ENCODE measurements at regions of chr11 and their contacts with region 1.

Region 1: DNA sequence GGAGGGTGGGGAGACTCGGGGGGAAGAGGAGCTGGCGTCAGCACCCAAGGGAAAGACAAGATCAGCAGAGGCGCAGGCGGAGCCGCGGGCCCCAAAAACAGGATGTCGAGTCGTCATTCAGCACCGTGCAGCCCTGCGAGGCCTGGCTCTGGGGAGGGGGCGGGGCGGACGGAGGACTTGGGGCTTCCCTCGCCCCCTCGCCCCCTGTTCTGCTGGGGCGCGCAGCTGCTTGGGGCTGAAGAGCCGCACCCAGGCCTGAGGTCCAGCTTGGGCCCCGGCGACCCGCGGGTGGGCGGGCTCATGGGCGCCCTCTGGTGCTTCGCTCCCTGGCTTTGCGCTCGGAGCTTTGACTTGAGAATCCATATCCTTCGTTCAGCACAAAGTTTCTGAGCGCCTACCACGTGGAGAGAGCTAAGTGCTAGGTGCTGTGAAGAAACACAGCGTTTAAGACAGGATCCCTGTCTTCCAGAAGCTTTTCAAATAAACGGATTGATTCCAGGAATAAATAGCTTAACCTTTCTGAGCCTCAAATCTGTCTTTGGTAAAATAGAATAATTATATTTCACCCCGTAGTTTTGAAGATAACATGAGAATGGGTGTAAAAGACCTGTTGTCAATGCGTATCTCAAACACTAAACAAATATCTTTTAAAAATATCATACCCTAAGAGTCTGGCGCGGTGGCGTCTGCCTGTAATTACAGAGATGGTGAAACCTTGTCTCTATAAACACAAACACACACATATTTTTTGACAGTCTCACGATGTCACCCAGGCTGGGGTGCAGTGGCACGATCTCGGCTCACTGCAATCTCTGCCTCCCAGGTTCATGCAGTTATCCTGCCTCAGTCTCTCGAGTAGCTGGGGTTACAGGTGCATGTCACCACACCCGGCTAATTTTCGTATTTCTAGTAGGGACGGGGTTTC is 929 bp upstream of the RHOG start:
- DNase-seq: peak; percentile 89 to 97 (median 94)
- ATAC-seq: peak; percentile 74 to 82
- H3K4me3 Mint-ChIP-seq: peak overlapping the region; percentile 84 to 96 (median 88)
- H3K27ac Mint-ChIP-seq: peak overlapping the region; percentile 90 to 100 (median 98)
- H3K4me1 Mint-ChIP-seq: peaks cover 28 to 51% (median 41%) of the 10 kb centered on the region in 4 donors
- H3K27me3 Mint-ChIP-seq: no peaks in the 10 kb centered on the region

Region 2: DNA sequence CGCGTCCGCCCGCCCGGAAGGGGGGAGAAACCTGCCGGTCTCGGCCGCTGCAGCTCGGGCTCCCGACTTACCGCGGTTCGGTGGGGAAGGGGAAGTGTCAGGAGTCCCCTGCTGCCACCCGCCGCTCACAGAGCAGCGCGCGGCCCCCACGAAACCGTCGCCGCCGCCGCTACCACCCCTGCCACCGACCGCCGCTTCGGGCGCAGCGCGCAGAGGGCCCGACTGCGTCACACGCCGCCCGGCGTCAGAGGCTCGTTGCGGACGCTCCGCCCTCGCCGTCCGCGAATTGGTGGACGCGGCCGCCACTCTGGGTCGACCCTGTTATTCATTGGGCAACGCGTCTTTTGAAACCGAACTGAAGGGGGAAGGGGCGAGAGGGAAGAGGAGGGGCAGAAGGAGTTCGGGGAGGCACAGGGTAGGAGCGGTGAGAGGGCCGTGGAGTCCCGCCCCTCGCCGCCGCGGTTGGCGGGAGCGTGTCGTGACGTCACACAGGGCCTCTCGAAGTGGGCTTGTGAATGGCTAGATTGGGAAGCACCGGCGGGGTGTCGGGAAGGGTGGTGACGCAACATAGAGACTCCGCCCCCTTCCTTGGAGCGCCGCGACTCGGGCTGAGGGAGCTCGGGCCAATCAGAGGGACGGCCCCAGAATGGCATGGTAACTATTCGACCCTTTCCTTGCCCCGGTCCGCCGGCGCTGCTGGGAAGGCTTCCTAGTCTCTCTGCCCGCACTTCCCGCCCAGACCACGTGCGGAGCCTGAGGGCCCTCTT is 44.2 kb before region 1 on chr11 and contains the start of gene NUP98:
- POLR2A ChIA-PET with region 1: interaction called, 27 read pairs
- DNase-seq: peak; percentile 97 to 100 (median 100)
- ATAC-seq: peak; percentile 93
- H3K4me3 Mint-ChIP-seq: peak within 1 kb of the TSS; percentile 86 to 97 (median 96)
- H3K27ac Mint-ChIP-seq: peak within 1 kb of the TSS; percentile 97 to 100 (median 99)
- H3K4me1 Mint-ChIP-seq: peaks cover 17 to 60% (median 52%) of the 10 kb centered on the region in 4 donors
- H3K27me3 Mint-ChIP-seq: peaks cover 0 to 2% (median 0%) of the 10 kb centered on the region in 5 donors
- polyA plus RNA-seq, gene NUP98: 31.8 to 50.9 (median 44.9) TPM

Region 3: GRCh38 chr11:3824714-3825472 is 16.8 kb before region 1 on chr11:
- POLR2A ChIA-PET with region 1: interaction called, 81 read pairs
- DNase-seq: peak; percentile 58 to 91 (median 78)
- ATAC-seq: peak; percentile 94 to 97
- H3K4me3 Mint-ChIP-seq: peak overlapping the region in 2 of 10 donors; percentile 20 to 68
- H3K27ac Mint-ChIP-seq: peak overlapping the region; percentile 79 to 96 (median 91)
- H3K4me1 Mint-ChIP-seq: peaks cover 20 to 51% (median 40%) of the 10 kb centered on the region in 4 donors
- H3K27me3 Mint-ChIP-seq: no peaks in the 10 kb centered on the region

Region 4: GRCh38 chr11:3929649-3930048 is 88.0 kb after region 1 on chr11:
- POLR2A ChIA-PET with region 1: no interaction called
- DNase-seq: no peak
- ATAC-seq: no peak
- H3K4me3 Mint-ChIP-seq: no peak overlapping the region
- H3K27ac Mint-ChIP-seq: peak overlapping the region in 5 of 10 donors; percentile 7 to 67 (median 30)
- H3K4me1 Mint-ChIP-seq: peaks cover 29 to 78% (median 71%) of the 10 kb centered on the region in 4 donors
- H3K27me3 Mint-ChIP-seq: no peaks in the 10 kb centered on the region

Region 5: GRCh38 chr11:3947061-3947460 is 105.4 kb after region 1 on chr11:
- POLR2A ChIA-PET with region 1: interaction called, 12 read pairs
- DNase-seq: peak in 9 of 10 donors; percentile 36 to 84 (median 73)
- ATAC-seq: peak; percentile 73 to 83
- H3K4me3 Mint-ChIP-seq: peak overlapping the region; percentile 66 to 88 (median 82)
- H3K27ac Mint-ChIP-seq: peak overlapping the region; percentile 77 to 99 (median 95)
- H3K4me1 Mint-ChIP-seq: peaks cover 58 to 97% (median 95%) of the 10 kb centered on the region in 4 donors
- H3K27me3 Mint-ChIP-seq: no peaks in the 10 kb centered on the region